Astrocyte of the cerebellum (primary cell): ENCODE measurements at regions of chr7 and their contacts with region 1.

Region 1: DNA sequence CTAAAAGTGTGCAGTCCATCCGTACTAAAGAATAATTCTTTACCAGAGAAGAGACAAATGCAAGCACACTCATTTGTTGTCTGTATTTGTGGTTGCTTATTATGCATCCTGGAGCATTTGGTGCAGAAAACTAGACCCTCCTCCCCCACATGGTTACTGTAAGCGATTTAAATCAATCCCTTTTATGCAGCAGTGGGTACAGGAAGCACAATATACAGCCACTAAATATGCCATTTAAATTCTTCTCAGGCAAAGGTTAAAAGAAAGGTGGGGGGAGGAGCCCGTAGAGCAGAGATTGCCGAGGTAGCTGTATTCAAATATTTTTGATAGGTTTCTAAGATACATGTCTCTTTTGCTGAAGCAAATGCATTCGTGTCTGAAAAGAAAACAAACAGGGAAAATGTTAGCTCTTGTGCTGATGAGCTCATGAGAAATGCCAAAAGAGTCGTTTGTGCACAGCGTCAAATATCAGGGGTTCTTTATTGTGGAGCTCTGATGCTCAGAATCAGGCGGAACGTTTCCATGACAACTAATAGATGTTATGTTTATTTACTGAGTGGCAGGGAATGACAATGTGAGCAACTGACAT is 131.3 kb upstream of the NPVF start:
- DNase-seq: no peak
- H3K4me3 ChIP-seq: no peak overlapping the region
- CTCF ChIP-seq: no peak

Region 2: DNA sequence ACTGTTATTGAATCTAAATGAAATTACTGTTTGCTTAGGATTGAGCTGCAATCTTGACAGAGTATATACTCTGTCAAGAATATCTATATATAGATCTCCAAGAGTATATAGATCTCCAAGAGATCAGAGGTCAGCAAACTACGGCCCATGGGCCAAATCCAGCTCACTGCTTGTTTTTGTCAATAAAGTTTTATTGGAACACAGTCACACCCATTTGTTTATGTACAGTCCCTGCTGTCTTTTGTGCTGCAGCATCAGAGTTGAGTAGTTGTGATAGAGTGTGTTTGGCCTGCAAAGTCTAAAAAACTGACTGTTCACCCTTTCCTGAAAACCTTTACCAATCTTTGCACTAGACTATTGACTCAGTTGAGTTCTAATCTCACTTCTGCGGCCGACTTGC is 64.9 kb before region 1 on chr7:
- in situ Hi-C with region 1: loop called (anchors 5 kb)
- DNase-seq: no peak
- H3K4me3 ChIP-seq: no peak overlapping the region
- CTCF ChIP-seq: no peak